PC-3 (cell line): ENCODE measurements at regions of chr5 and their contacts with region 1.

Region 1: DNA sequence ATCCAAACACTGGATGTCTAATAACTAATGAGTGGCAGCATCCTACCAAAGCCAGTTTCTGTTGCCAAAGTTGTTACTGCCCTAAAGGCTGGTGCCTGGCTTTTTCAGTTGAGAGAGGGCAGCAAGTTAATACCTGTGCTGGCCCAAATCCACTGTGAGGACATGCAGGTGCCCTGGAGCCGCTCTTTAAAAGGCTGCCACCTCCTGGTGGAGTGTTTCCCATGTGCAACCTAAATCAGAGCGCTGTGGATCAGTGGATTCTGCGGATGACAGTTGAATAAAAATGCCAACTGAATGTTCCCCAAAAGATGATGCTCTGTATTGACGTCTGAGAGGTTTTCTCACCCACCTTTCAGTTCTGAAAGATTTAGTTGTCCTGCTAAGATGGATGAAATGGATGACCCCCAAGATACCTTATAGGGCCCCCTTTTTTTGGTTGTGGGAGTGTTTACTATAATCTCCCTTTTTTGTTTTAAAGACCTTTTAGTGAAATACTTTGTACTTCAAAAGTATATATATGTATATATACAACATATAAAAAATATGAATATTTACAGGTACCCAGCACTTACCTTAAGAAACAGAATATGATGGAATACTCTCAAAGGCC is 146.4 kb downstream of the EGFLAM start:
- DNase-seq: peak; percentile 51
- ATAC-seq: peak; percentile 68
- H3K4me3 ChIP-seq: no peak overlapping the region
- H3K27ac ChIP-seq: no peak overlapping the region
- H3K4me1 ChIP-seq: no peaks in the 10 kb centered on the region
- H3K27me3 ChIP-seq: peaks cover 58% of the 10 kb centered on the region
- CTCF ChIP-seq: peak; percentile 80

Region 2: DNA sequence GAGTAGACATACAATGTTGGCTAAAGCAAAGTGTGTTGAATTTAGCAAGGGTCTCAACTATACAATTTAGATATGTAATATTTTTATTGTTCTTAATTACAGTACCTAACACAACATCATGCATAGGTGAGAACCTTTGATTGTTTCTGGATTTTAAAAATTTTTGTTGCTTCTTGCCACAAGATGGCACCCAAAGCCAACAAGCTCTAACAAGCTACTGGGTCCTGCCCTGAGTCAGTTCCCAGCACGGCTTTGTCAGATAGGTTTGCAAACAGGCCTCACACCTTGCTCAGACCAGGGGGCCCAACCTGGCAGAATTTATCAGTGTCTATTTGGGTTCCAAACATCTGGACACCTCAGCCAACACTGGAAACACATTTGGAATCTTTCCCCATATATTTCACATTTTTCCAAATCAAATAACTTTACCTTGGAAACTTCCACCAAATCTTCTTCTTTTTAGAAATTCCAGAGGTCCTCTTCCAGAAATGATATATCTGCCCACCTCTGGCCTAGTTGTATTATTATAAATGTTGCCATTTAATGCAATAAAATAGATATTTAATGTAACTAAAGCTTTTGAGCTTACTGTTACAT is 195.9 kb before region 1 on chr5:
- CTCF ChIA-PET with region 1: no interaction called
- POLR2A ChIA-PET with region 1: no interaction called
- intact Hi-C with region 1: loop called (anchors 1 kb)
- DNase-seq: peak; percentile 74
- ATAC-seq: peak; percentile 76
- H3K4me3 ChIP-seq: no peak overlapping the region
- H3K27ac ChIP-seq: no peak overlapping the region
- H3K4me1 ChIP-seq: no peaks in the 10 kb centered on the region
- H3K27me3 ChIP-seq: peaks cover 47% of the 10 kb centered on the region
- CTCF ChIP-seq: peak; percentile 80

Region 3: DNA sequence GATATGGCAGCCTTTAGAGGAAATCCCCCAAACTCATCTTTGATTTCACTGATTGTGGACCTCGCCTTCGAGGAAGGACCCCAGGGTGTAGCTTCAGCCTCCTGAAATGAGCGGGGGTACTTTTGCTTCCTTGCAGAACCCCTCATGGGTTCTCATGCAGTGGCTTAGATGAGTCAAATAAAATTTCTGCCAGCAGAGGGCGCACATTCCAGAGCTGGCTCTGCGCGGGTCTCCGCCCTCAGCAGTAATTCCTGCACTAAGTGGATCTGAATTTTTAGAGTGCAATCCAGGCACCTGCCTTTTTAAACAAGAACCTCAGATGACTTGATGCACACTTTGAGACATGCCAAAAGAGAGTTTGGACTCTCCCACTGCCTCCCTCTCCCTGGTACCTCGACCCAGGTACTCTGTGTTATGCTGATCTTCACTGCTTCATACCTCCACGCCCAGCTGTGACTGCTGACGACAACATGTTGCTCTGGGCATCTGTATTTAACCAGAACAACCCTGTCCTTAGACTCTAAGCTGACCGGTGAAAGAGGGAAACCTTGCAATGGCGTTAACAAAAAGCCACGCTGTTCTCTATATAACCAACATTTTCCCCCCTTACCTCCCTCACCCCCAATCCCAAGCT is 139.1 kb before region 1 on chr5:
- CTCF ChIA-PET with region 1: no interaction called
- POLR2A ChIA-PET with region 1: no interaction called
- intact Hi-C with region 1: loop called (anchors 1 kb)
- DNase-seq: peak; percentile 86
- ATAC-seq: peak; percentile 98
- H3K4me3 ChIP-seq: no peak overlapping the region
- H3K27ac ChIP-seq: no peak overlapping the region
- H3K4me1 ChIP-seq: no peaks in the 10 kb centered on the region
- H3K27me3 ChIP-seq: peaks cover 64% of the 10 kb centered on the region
- CTCF ChIP-seq: peak; percentile 94

Region 4: DNA sequence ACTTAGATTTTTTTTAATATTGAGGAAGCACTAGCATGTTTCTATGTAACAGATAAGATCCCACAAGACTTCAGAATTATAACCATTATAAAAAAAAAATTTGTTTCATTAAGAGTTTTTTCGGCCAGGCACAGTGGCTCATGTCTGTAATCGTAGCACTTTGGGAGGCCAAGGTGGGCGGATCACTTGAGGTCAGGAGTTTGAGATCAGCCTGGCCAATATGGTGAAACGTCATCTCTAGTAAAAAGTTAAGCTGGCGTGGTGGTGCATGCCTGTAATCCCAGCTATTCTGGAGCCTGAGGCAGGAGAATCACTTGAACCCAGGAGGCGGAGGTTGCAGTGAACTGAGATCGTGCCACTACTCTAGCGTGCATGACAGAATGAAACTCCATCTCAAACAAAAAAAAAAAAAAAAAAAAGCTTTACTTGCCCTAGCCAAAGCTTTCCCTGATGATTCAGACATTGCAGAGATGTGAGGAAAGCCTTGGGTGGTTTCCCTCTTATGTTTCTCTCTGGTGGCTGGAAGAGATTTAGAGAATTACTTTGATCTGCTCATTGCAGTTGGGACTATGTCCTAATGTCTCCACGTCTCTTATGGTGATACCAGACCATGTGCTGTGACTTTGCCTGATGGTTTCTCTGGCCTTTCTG is 81.0 kb before region 1 on chr5:
- CTCF ChIA-PET with region 1: no interaction called
- POLR2A ChIA-PET with region 1: no interaction called
- intact Hi-C with region 1: no loop called
- DNase-seq: no peak
- ATAC-seq: no peak
- H3K4me3 ChIP-seq: no peak overlapping the region
- H3K27ac ChIP-seq: no peak overlapping the region
- H3K4me1 ChIP-seq: no peaks in the 10 kb centered on the region
- H3K27me3 ChIP-seq: peaks cover 78% of the 10 kb centered on the region
- CTCF ChIP-seq: no peak